ENCODE measurements at regions of chr5 and their contacts with region 1.

Region 1: DNA sequence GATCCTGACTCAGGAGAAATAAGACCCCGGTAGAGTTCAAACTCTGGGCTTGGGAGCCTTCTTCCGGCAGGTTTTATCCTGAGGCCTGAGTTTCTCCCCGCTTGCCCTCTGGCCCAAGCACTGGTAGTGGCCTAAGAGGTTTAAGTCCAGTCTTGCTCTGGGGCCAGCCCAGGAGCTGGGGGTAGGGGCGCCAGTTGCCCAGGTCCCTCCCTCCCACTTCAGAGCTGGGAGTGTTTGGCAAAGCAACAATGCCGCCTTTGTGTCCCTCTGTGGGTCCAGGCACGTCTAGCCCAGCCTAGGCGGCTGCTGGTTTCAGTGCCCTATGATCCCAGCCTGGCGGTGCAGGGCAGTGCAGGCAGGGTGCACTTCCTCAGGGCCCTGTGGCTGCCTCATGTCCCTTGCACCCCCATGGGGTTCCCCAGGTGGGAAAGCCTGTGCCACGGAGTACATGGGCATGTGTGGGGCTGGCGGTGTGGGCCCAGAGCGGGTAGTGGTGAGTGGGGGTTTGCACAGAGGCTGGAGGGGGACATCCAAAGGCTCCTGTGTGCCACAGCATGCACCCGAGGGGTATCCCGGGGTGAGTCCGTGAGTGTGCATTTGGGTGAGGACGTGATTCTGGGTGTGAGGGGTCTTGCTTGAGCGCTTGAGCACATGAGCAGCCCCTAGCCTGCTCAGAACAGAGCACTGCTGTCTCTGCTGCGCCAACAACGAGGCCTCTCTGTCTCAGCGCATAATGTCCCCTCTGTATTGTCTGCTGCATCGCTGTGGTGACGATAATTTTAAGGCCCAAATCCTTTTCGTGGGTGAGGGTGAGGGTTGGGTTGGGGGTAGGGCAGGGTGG is 61.7 kb upstream of the PSD2 start:
- DNase-seq: peak; percentile 98
- ATAC-seq: peak; percentile 97
- H3K4me3 ChIP-seq: peak overlapping the region; percentile 60 to 96 (median 81)
- H3K27ac ChIP-seq: peak overlapping the region; percentile 100
- H3K4me1 ChIP-seq: peaks cover 55% of the 10 kb centered on the region
- H3K27me3 ChIP-seq: no peaks in the 10 kb centered on the region; a peak in 1 of 5 replicates
- CTCF ChIP-seq: peak; percentile 53
- EP300 ChIP-seq: peak; percentile 84
- POLR2A ChIP-seq: peak in 1 of 2 experiments; percentile 96; a peak in 2 of 4 replicates
- RAD21 ChIP-seq: peak; percentile 76

Region 2: GRCh38 chr5:139646912-139647505 is 86.9 kb before region 1 on chr5:
- CTCF ChIA-PET with region 1: no interaction called
- POLR2A ChIA-PET with region 1: interaction called, 17 read pairs
- in situ Hi-C with region 1: no loop called
- intact Hi-C with region 1: no loop called
- DNase-seq: no peak
- ATAC-seq: peak; percentile 2; the same call in 2 of the 3 replicates
- H3K4me3 ChIP-seq: peak overlapping the region; percentile 74 to 95 (median 91)
- H3K27ac ChIP-seq: no peak overlapping the region
- H3K4me1 ChIP-seq: peaks cover 67% of the 10 kb centered on the region
- H3K27me3 ChIP-seq: no peaks in the 10 kb centered on the region; a peak in 1 of 5 replicates
- CTCF ChIP-seq: no peak
- EP300 ChIP-seq: no peak
- POLR2A ChIP-seq: no peak
- RAD21 ChIP-seq: no peak

Region 3: DNA sequence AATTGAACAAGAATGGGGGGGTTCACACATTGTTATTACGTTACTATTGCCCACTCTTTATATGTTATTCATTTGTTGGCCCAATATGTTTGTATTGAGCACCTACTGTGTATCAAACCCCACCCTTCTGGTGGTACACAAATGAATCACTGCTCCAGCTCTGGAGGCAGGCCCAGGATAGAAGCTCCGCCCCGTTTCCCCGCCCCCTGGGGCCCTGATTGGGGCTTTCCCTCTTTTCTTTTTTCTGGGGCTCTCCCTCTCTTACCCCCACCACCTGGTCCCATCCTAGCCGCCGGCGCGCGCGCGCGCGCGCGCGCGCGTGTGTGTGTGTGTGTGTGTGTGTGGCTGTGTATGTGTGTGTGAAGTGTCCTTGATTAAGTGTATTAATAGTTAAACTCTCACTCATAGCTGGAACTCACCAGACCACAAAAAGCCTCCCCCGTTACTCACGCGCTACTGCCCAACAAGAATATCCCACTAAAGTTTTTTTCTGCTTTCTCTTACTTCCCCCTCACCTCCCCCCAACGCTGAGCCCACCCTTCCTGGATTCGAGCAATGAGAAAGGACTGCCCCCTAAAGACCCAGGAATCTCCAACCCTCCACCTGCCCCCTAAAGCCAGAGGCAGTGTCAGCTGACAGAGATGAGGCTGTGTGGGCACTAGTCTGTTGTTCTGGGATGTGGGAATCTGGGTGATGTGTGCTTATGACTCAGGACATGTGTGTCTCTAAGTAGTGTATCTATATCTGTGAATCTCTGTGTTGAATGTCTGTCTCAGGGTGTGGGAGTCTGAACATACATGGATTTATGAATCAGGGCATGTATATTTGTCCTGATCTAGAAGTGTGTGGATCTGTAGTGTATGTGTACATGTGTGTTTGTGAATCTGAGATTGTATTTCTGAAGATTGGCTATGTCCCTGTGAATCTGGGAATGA is 81.8 kb before region 1 on chr5:
- CTCF ChIA-PET with region 1: no interaction called
- POLR2A ChIA-PET with region 1: interaction called, 22 read pairs
- in situ Hi-C with region 1: no loop called
- intact Hi-C with region 1: no loop called
- DNase-seq: no peak
- ATAC-seq: no peak
- H3K4me3 ChIP-seq: peak overlapping the region; percentile 41 to 74 (median 57); a peak in 4 of 6 replicates
- H3K27ac ChIP-seq: peak overlapping the region; percentile 49
- H3K4me1 ChIP-seq: peaks cover 67% of the 10 kb centered on the region
- H3K27me3 ChIP-seq: no peaks in the 10 kb centered on the region; a peak in 1 of 5 replicates
- CTCF ChIP-seq: no peak
- EP300 ChIP-seq: no peak
- POLR2A ChIP-seq: no peak
- RAD21 ChIP-seq: no peak

Region 4: GRCh38 chr5:139662617-139663016 is 71.3 kb before region 1 on chr5:
- CTCF ChIA-PET with region 1: no interaction called
- POLR2A ChIA-PET with region 1: no interaction called
- in situ Hi-C with region 1: no loop called
- intact Hi-C with region 1: no loop called
- DNase-seq: no peak
- ATAC-seq: no peak
- H3K4me3 ChIP-seq: no peak overlapping the region
- H3K27ac ChIP-seq: no peak overlapping the region
- H3K4me1 ChIP-seq: peaks cover 60% of the 10 kb centered on the region
- H3K27me3 ChIP-seq: no peaks in the 10 kb centered on the region
- CTCF ChIP-seq: no peak
- EP300 ChIP-seq: no peak
- POLR2A ChIP-seq: no peak
- RAD21 ChIP-seq: no peak

Region 5: DNA sequence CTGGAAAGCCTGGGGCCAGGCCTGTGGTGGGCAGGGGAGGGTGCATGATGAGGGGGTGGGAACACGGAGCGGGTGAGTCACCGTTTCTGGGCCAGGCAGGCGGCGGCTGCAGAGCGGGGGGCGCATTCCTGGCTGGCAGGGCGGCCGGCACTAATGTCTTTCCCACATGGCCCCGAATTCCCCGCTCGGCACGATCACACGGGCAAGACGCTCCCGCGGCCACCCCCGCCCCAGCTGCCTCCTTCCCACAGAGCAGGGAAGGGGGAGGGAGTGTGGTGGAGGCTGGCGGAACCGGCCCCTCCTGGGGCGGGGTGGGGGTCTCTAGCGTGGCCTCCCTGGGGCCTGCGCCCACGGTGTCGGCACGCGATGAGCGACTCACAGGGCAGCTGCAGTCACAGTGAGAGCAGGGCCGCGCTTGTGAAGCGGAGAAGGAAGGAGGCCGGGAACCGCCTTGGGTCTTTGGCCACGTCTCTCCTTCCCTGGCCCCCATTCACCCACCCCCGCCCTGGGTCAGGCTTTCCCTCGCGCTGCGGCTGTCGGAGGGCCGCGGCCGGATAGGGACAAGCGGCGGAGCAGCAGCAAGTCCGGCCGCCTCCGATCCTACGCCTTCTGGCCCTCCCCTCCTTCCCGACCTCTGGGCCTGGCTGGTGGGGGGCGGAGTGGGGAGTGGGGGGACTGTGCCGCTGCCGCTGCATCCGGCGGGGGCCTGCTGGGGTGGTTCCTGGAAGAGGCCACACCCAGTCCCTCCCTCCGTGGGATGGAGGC is 36.8 kb before region 1 on chr5:
- CTCF ChIA-PET with region 1: no interaction called
- POLR2A ChIA-PET with region 1: interaction called, 77 read pairs
- in situ Hi-C with region 1: no loop called
- intact Hi-C with region 1: loop called (anchors 5 kb)
- DNase-seq: peak; percentile 70
- ATAC-seq: peak; percentile 51
- H3K4me3 ChIP-seq: peak overlapping the region; percentile 54 to 74 (median 66); a peak in 5 of 6 replicates
- H3K27ac ChIP-seq: peak overlapping the region; percentile 83
- H3K4me1 ChIP-seq: peaks cover 88% of the 10 kb centered on the region
- H3K27me3 ChIP-seq: no peaks in the 10 kb centered on the region
- CTCF ChIP-seq: no peak
- EP300 ChIP-seq: no peak
- POLR2A ChIP-seq: peak; percentile 36 to 59
- RAD21 ChIP-seq: 0 out of 2 replicates have a peak, but pooled peaks have one; percentile 9

Region 6: DNA sequence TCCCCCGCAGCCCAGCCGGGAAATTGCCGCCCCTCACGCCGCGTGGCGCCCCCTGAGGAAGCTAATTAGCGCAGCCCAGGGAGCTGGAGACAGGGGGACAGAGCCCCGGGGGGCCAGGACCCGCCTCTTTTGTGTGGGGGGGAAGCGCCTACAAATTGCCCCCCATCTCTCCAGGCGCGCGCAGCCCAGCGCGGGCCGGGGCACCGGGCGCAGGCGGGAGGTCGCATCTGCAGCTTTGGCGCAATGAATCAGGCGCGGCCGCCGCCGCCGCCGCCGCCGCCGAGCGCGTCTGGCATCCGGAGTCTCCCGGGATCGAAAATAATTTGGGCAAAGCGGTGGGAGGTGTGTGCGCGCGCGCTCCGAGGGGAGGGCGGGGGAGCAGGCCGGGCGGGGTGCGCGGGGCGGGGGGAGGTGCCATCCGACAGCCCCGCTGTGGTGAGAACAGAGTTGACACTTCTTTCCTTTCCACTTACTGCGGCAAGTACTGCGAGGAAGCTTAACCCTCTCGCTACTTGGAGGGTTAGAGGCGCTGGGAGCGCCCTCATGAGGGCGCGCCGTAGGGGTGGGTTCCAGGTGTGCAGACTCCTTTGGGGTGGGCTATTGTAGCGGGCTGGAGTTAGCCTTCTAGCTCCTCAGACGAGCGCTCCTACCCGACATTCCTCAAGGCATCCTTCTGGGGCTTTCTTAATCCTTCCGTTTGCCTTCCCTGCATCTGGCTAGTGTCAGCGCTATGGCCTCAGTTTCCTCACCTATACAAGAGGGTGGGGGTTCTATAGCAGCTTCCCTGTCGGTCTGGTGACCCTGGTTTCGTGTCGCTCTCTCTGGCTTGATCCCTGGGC is 22.6 kb before region 1 on chr5:
- CTCF ChIA-PET with region 1: no interaction called
- POLR2A ChIA-PET with region 1: interaction called, 62 read pairs
- in situ Hi-C with region 1: no loop called
- intact Hi-C with region 1: no loop called
- DNase-seq: no peak
- ATAC-seq: peak; percentile 7
- H3K4me3 ChIP-seq: peak overlapping the region; percentile 52 to 74 (median 56); a peak in 5 of 6 replicates
- H3K27ac ChIP-seq: peak overlapping the region; percentile 46
- H3K4me1 ChIP-seq: peaks cover 58% of the 10 kb centered on the region
- H3K27me3 ChIP-seq: no peaks in the 10 kb centered on the region
- CTCF ChIP-seq: peak; percentile 47
- EP300 ChIP-seq: no peak
- POLR2A ChIP-seq: no peak
- RAD21 ChIP-seq: no peak

Region 7: GRCh38 chr5:139745800-139746690 is 12.1 kb after region 1 on chr5:
- CTCF ChIA-PET with region 1: no interaction called
- POLR2A ChIA-PET with region 1: interaction called, 132 read pairs
- in situ Hi-C with region 1: no loop called
- intact Hi-C with region 1: no loop called
- DNase-seq: peak; percentile 85
- ATAC-seq: peak; percentile 77
- H3K4me3 ChIP-seq: peak overlapping the region; percentile 49 to 73 (median 55); a peak in 5 of 6 replicates
- H3K27ac ChIP-seq: peak overlapping the region; percentile 14
- H3K4me1 ChIP-seq: peaks cover 88% of the 10 kb centered on the region
- H3K27me3 ChIP-seq: peaks cover 0 to 14% of the 10 kb centered on the region in 2 experiments; a peak in 2 of 5 replicates
- CTCF ChIP-seq: no peak
- EP300 ChIP-seq: no peak
- POLR2A ChIP-seq: no peak
- RAD21 ChIP-seq: no peak

Region 8: GRCh38 chr5:139759219-139759721 is 25.4 kb after region 1 on chr5:
- CTCF ChIA-PET with region 1: no interaction called
- POLR2A ChIA-PET with region 1: interaction called, 12 read pairs
- in situ Hi-C with region 1: no loop called
- intact Hi-C with region 1: no loop called
- DNase-seq: no peak
- ATAC-seq: no peak
- H3K4me3 ChIP-seq: no peak overlapping the region
- H3K27ac ChIP-seq: no peak overlapping the region
- H3K4me1 ChIP-seq: peaks cover 90% of the 10 kb centered on the region
- H3K27me3 ChIP-seq: peaks cover 0 to 21% of the 10 kb centered on the region in 2 experiments; a peak in 4 of 5 replicates
- CTCF ChIP-seq: no peak
- EP300 ChIP-seq: no peak
- POLR2A ChIP-seq: no peak
- RAD21 ChIP-seq: no peak

Measured in HepG2 (cell line).